Activated B cell treated with CpG ODN at 0.5 μM for 24 hours (primary cell): ENCODE measurements at regions of chr18 and their contacts with region 1.

Region 1: DNA sequence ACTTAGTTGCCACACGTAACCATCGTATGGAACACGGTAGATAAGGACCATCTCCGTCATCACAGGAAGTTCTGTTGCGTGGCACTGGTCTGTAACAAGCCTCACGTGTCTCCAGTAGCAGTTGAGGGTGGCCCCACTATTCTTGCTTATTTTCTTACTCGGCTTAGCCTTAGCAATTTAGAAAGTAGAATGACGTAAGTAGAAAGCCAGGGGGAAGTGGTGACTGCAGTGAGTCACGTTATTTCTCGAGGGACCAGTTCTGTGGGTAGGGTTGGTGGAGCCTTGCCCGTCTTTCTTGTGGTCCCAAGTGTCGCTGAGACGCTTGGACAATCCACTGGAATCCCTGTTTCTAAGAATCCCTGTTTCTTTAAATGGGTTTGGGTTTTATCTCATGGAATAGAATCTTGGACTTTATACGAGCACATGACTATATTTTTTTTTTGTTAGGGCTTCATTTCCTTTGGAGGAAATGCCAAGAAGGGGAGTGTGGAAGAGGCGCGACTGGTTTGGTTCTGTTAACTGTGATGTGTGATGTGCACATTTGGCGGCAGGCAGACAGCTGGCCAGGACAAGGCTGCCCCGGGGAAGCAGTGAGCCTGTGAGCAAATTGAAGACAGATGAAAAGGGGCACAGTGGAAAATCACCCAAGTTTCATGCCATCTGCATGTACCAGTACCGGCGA is 96.2 kb downstream of the CABLES1 start:
- DNase-seq: peak; percentile 58
- ATAC-seq: peak; percentile 75
- H3K4me3 Mint-ChIP-seq: peak overlapping the region; percentile 76
- H3K27ac Mint-ChIP-seq: peak overlapping the region; percentile 97
- H3K4me1 Mint-ChIP-seq: peaks cover 74% of the 10 kb centered on the region
- H3K27me3 Mint-ChIP-seq: no peaks in the 10 kb centered on the region
- CTCF ChIP-seq: no peak

Region 2: GRCh38 chr18:21600526-21601410 is 1630.7 kb before region 1 on chr18 and contains the start of gene ESCO1:
- CTCF ChIA-PET with region 1: no interaction called
- POLR2A ChIA-PET with region 1: no interaction called
- intact Hi-C with region 1: loop called (anchors 10 kb)
- DNase-seq: peak; percentile 88
- ATAC-seq: peak; percentile 80
- H3K4me3 Mint-ChIP-seq: peak within 1 kb of the TSS; percentile 96
- H3K27ac Mint-ChIP-seq: peak within 1 kb of the TSS; percentile 99
- H3K4me1 Mint-ChIP-seq: peaks cover 50% of the 10 kb centered on the region
- H3K27me3 Mint-ChIP-seq: no peaks in the 10 kb centered on the region
- CTCF ChIP-seq: peak; percentile 78
- total RNA-seq, gene ESCO1: 18.2 and 19.6 TPM in 2 replicates

Region 3: GRCh38 chr18:23204589-23205235 is 26.8 kb before region 1 on chr18:
- CTCF ChIA-PET with region 1: no interaction called
- POLR2A ChIA-PET with region 1: interaction called, 9 read pairs
- intact Hi-C with region 1: loop called (anchors 2 kb)
- DNase-seq: no peak
- ATAC-seq: peak; percentile 59
- H3K4me3 Mint-ChIP-seq: no peak overlapping the region
- H3K27ac Mint-ChIP-seq: peak overlapping the region; percentile 46
- H3K4me1 Mint-ChIP-seq: peaks cover 19% of the 10 kb centered on the region
- H3K27me3 Mint-ChIP-seq: peaks cover 12% of the 10 kb centered on the region
- CTCF ChIP-seq: no peak

Region 4: DNA sequence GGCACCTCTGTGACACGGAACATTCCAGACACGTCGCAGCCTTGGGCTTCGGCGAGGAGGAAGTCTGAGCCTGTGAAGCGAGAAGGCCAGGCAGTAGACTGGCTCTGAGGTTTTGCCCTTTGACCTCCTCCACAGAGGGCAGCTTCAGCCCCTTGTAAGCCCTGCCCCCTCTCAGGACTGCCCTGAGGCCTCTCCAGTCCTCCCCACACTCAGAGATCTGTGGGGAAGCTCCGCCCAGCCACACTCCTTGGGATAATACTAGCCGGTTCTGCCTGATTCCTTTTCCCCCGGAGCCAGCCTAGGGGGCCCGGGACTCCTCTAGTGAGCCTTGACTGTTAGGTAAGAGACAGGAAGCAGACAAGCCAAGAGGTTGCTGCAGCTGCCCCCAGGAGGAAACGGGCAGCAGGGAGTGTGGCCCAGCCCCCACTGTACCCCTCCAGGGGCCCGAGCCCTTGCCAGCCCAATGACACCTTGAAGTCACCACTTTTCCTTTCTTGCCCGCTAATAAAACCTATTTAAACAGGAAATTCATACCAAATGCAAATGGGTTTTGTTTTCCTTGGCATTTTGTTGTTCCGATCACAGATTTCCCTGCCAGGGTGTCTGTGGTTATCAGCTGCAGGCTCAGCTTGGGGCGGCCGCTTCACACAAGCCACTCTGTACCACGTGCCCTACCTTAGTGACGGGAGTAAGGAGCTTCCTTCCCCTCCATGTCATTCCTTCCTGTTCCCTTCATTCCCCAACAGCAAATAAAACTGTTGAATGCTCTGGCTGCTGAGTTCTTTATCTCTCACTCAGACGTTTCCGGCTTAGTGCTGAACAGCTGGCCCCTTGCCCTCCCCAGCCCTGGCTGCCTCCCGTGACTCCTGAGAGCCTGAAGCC is 28.5 kb after region 1 on chr18:
- CTCF ChIA-PET with region 1: interaction called, 5 read pairs
- POLR2A ChIA-PET with region 1: interaction called, 23 read pairs
- intact Hi-C with region 1: loop called (anchors 1 kb)
- DNase-seq: no peak
- ATAC-seq: peak; percentile 67
- H3K4me3 Mint-ChIP-seq: peak overlapping the region; percentile 76
- H3K27ac Mint-ChIP-seq: peak overlapping the region; percentile 79
- H3K4me1 Mint-ChIP-seq: peaks cover 46% of the 10 kb centered on the region
- H3K27me3 Mint-ChIP-seq: no peaks in the 10 kb centered on the region
- CTCF ChIP-seq: no peak

Region 5: DNA sequence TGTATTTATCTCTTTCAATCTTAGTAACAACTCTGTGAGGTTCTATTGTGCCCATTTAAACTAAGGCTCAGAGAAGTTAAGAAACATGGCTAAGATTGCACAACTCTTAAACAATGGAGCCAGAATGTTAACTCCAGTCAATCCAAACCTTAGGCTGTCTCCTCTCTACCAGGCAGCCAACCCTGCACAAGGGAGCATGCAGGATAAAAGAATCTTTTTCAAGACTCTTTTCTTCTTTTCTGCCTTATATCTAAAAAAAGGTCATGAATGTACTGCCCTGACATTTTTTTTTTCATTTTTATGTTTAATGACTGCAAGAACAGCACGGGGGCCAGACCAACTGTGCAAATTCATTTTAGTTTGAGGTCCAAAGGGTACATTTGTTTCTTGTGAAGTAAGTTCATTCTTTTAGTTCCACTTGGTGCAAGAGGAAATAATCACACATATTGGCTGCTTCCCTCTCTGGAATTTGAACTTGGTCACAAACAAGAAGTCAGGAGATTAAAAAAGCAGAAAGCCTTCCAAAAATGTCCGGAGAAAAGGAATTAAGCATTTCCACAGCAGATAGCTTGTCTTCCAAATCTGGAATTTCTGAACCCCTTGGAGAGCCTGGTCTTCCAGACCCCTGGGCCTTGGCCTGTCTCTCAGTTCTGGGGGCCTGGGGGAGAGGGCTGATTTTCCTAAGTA is 125.6 kb after region 1 on chr18:
- CTCF ChIA-PET with region 1: interaction called, 6 read pairs
- POLR2A ChIA-PET with region 1: interaction called, 3 read pairs
- intact Hi-C with region 1: loop called (anchors 1 kb)
- DNase-seq: no peak
- ATAC-seq: no peak
- H3K4me3 Mint-ChIP-seq: no peak overlapping the region
- H3K27ac Mint-ChIP-seq: no peak overlapping the region
- H3K4me1 Mint-ChIP-seq: peaks cover 33% of the 10 kb centered on the region
- H3K27me3 Mint-ChIP-seq: no peaks in the 10 kb centered on the region
- CTCF ChIP-seq: no peak

Region 6: DNA sequence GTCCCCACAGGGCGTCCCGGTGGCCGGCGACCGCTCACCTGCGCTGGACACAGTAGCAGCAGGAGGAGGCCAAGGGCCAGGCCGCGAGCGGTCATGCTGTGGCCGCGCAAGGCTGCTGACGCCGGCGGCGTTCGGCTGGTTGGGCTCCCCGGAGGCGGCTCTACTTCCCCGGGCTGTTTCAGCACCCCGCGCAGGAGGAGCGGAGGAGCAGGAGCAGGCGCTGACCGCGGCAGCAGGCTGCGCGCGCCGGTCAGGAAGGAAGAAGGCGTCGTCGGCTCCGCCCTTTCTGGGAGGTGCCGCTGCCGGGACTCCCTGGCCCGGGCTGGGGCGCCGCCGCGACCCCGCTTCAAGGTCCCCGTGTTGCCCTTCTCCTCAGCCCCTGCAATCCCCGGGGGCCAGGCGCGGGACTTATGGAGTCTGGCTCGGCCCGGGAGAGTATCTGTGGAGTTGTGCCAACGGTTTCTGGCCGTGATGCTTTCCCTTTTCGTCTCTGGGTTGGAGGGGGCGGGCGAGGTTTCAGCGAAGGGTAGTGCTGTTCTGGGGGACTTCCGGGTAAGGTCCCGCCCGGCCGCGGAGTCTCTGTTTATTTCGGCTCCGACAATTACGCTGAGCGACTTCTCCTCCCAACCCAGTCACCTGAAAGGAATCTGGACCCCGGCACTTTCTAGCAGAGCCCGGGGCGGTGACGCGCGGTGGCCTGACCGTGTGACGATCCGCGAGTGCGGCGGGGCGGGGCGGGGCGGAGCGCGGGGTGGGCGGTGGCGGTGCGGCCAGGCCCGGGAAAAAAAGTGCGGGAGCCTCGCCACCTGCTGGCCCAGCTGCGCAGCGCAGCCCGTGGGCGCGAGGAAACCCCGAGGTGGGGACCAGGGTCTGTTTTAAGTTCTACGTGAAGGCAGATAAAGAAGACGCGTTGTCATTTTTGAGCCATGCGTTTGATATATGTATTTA is 355.0 kb after region 1 on chr18 and contains the start of gene NPC1:
- CTCF ChIA-PET with region 1: no interaction called
- POLR2A ChIA-PET with region 1: no interaction called
- intact Hi-C with region 1: loop called (anchors 1 kb)
- DNase-seq: peak; percentile 94
- ATAC-seq: peak; percentile 88
- H3K4me3 Mint-ChIP-seq: peak within 1 kb of the TSS; percentile 91
- H3K27ac Mint-ChIP-seq: peak within 1 kb of the TSS; percentile 95
- H3K4me1 Mint-ChIP-seq: peaks cover 31% of the 10 kb centered on the region
- H3K27me3 Mint-ChIP-seq: no peaks in the 10 kb centered on the region
- CTCF ChIP-seq: peak; percentile 39
- total RNA-seq, gene NPC1: 31.9 and 36.5 TPM in 2 replicates